Activated CD4-positive, alpha-beta T cell treated with anti-CD3 and anti-CD28 coated beads, Interleukin-2, amount 10 ng/mL, durations not matched to agents 24 days and 14 days (primary cell): ENCODE measurements at regions of chr10 and their contacts with region 1.

Region 1: GRCh38 chr10:38010119-38010903 is at the start of gene ZNF33A:
- DNase-seq: peak; percentile 97
- H3K4me3 Mint-ChIP-seq: peak within 1 kb of the TSS; percentile 87
- H3K27ac Mint-ChIP-seq: peak within 1 kb of the TSS; percentile 99
- H3K4me1 Mint-ChIP-seq: peaks cover 20% of the 10 kb centered on the region
- H3K27me3 Mint-ChIP-seq: no peaks in the 10 kb centered on the region
- total RNA-seq, gene ZNF33A: 17.8 and 19.0 TPM in 2 replicates

Region 2: DNA sequence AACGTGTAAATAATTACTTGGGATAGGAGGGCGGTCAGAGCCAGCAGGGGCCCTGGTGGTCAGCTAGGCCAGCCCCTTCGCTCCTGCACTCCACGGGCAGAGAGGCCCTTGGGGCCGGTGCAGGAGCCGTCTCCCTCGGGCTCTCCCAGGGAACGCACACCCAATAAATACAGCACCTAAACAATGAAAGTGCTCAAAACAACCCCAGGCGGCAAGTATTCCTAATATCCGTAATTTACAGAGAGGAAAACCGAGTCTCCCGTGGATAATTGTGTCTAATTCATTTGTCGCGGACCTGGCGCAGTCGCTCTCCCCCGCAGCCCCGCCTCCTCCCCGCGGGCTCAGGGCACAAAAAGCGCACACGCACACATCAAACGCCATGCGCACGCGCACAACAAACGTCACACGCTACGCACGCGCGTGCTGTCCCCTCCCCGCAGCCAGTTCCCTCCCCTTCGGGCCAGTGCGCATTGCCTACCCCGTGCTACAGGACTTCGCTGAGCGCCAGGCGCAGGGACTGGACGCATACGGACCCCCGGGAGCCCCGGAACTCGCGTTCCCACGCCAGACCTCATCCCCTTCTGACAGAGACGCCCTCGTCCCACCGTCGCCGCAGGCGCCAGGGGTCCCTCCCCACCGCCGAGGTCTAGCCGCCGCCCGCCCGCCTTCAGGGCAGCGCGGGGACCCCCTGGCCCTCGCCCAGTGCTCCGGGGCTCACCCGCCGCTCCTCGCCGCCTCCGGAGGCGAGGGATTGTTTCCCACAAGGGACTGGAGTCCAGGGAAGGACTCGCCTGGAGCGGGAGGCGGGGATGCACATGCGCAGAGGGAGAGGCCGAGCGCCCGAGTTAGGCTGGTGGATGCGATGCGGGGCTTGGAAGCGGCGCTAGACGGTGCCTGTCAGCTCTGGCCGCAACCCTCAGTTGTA is 152.8 kb before region 1 on chr10 and contains the start of gene ZNF248:
- intact Hi-C with region 1: loop called (anchors 1 kb)
- DNase-seq: peak; percentile 99
- H3K4me3 Mint-ChIP-seq: peak within 1 kb of the TSS; percentile 89
- H3K27ac Mint-ChIP-seq: peak within 1 kb of the TSS; percentile 85
- H3K4me1 Mint-ChIP-seq: peaks cover 27% of the 10 kb centered on the region
- H3K27me3 Mint-ChIP-seq: no peaks in the 10 kb centered on the region
- total RNA-seq, gene ZNF248: 7.9 and 9.3 TPM in 2 replicates

Region 3: DNA sequence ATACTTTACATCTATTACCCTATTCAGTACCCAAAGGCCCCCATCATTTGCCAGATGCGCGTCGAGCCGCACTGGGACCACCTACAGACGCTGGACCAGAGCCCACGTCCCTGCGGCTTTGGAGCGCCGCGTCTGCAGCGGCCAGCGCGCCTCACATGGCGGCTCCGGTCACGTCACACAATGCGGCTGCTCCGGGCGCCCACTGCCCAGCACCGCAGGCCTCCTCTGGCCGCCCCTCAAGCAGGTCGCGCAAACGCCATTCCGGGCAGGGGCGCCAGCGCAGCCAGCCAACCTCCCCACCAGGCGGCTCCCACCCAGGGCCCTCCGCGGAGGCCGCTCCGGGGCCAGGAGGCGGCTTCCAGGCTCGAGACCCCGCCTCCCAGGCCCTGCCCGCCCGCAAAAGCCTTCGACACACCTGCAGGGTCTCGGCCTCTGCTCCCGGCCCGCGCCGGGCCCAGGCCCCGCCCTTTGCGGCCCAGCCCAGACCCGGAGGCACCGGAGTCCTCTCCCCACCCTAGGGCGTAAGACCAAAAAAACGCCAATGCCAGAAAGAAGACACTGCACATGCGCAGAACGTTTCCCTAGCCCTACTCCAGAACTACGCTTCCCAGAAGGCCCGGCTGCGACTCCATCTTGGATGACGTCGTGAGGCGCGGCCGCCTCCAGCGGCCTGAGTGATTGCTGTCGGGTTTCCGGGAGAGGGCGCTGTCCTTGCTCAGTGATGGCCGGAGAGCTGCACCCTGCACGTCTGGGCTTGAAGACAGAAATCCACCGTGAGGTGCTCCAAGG is 34.0 kb before region 1 on chr10 and contains the start of gene ZNF25:
- intact Hi-C with region 1: loop called (anchors 1 kb)
- DNase-seq: peak; percentile 98
- H3K4me3 Mint-ChIP-seq: peak within 1 kb of the TSS; percentile 95
- H3K27ac Mint-ChIP-seq: peak within 1 kb of the TSS; percentile 98
- H3K4me1 Mint-ChIP-seq: peaks cover 23% of the 10 kb centered on the region
- H3K27me3 Mint-ChIP-seq: no peaks in the 10 kb centered on the region
- total RNA-seq, gene ZNF25: 7.6 and 7.9 TPM in 2 replicates